Panc1 (cell line): ENCODE measurements at regions of chr3 and their contacts with region 1.

Region 1: DNA sequence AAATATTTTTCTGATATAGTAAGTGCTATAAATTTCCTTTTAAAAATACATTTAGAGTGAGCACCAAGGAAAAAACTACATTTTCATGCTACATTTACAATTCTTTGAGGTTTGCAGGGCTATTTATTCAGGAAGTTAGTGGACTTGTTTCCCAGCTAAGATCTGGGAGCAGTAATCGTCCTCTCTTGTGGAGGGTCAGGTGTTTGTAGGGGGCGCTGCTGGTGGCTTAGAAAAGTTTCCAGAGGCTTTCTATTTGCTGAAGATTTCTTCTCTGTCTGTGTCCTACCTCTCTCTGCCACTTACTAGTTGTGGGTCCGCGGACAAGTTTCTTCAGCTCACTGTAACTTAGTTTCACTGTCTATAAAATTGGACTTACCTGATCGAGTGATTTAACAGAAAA is 163.9 kb downstream of the PEX5L start:
- DNase-seq: no peak
- ATAC-seq: no peak
- H3K4me3 ChIP-seq: no peak overlapping the region
- H3K27ac ChIP-seq: no peak overlapping the region
- H3K4me1 ChIP-seq: no peaks in the 10 kb centered on the region
- H3K27me3 ChIP-seq: no peaks in the 10 kb centered on the region
- CTCF ChIP-seq: peak; percentile 33; the same call in 1 of the 2 replicates

Region 2: DNA sequence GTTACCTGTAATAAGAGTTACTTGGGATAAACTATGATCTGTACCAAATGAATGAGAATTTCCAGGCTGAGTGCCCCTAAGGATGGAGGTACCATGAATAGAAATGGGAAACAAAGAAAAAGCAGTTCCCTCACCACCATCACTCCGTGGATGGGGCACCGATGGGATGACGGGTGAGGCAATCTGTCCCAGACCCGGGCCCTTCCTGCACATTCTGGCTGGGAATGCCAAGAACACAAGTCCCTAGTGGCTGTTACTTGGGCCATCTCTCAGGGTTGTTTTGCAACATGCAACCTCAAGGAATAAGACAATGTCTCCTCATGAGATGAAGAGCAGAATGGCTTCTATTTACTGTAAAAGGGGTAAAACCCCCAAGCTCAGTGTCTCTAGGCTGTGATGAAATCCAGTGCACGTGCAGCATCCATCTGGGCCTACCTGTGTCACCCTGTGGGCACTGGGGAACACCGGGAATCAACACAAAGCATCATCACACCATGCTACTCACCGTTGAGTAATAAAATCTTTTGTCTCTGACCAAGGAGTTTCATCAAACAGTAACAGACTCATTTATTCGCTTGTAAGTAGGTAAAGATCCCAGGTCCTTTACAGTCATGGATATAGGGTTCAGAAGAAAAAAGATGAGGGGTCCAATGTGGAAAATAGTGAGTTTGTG is 443.8 kb before region 1 on chr3:
- CTCF ChIA-PET with region 1: interaction called, 13 read pairs
- POLR2A ChIA-PET with region 1: no interaction called
- in situ Hi-C with region 1: no loop called
- intact Hi-C with region 1: no loop called
- DNase-seq: no peak
- ATAC-seq: no peak
- H3K4me3 ChIP-seq: no peak overlapping the region
- H3K27ac ChIP-seq: no peak overlapping the region
- H3K4me1 ChIP-seq: no peaks in the 10 kb centered on the region
- H3K27me3 ChIP-seq: no peaks in the 10 kb centered on the region
- CTCF ChIP-seq: no peak